ENCODE measurements at regions of chr11 and their contacts with region 1.

Region 1: DNA sequence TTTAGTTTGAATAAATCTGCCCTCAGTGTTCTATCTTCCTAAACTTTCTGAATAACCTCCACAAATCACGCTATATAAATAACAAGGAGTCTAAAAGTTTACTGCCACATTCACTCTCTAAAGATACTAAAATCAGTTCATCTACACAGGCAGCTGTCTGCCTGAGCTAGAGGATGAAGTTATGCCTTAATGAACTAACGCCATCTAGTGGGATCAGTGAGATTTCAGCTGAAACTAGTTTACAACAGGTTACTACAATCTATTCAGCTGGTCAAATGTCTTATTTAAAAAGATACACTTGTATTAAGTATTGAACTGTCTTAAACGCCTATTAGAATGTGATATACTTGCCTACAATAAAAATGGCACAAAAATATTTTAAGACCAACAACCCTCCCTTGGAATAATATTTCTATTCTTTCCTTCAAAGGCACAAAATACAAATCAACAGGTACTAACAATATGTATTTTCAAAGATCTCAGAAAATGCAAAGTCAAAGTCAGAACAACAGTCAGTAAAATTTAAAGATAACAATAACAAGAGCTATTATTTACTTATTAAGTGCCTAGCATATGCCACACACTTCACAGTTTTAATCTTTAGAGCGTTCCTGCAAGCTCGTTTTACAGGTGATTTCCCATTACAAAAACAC is 84.1 kb downstream of the LARGE2 start:
- DNase-seq: peak in 1 of 2 donors; percentile 27
- H3K4me3 ChIP-seq: no peak overlapping the region
- CTCF ChIP-seq: no peak
- POLR2A ChIP-seq: no peak

Region 2: DNA sequence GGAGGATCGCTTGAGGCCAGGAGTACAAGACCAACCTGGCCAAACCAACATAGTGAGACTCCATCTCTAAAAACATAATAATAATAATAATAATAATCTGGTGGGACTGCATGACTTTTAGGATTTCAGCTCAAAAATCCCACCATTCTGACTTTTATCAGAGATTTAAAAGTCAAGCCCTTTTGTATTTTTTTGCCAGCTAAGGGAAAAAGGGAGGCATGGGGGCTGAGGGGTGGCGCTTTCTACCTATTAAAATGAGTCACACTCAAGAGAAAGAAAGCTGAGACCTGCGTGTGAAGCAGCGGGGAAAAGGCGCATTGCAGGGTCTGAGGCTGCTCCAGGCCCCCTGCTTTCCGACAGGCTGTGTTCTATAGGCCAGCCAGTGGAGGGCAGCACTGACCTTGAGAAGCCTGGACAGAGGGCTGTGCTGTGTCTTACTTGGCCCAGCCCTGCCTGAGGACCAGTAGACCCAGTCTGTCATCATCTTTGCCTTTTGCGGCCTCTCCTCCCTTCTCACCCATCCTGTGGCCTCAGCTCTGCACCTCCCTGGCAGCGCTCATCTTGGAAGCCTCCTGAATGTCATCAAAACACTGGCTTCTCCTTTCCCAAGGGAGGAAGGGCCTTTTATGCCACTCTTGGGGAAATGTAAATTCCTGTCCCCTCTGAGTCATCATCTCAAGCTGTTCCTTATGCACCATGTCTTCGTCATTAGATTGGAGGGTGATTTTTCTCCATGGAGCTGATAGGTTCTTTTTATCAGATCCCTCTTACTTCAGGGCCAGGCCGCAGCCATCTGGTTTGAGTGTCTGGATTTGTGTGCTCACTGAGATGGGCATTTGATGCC is 133.8 kb before region 1 on chr11:
- intact Hi-C with region 1: loop called (anchors 10 kb)
- DNase-seq: no peak
- H3K4me3 ChIP-seq: no peak overlapping the region
- CTCF ChIP-seq: no peak
- POLR2A ChIP-seq: no peak

Region 3: DNA sequence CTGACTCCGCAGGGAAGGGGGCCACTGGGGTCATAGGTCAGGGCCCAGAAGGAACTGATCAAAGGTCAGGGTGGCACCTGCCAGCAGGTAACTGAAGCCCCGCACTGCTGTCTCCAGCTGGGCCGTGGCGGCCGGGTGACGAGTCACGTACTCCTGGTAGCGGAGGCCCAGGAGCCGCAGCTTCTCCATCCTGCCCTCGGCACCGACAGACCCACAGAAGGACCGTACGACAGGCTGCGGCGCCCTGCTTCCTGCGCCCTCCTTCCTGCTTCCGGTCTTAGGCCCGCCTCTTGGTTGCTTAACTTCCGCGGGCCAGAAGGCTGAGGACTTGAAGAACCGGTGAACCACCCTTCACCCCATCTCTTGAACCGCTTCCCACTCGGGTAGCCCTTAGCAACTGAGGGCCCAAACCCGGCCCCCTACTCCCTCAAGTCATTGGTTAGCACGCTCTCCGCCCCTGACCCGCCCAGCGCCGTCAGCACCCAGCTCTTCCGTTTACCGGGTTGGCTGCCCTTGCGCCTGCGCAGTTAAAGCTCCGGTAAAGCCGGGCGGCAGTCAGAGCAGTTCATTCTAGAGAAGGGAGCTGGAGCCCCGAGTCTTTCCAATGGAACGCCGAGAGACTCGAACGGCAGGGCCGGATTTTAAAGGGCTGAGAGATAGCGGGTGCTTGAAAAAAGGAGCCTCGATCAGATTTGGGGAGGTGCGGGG is 88.8 kb before region 1 on chr11 and contains the start of gene PEX16:
- intact Hi-C with region 1: no loop called
- DNase-seq: peak; percentile 97 to 99
- H3K4me3 ChIP-seq: peak within 1 kb of the TSS; percentile 77
- CTCF ChIP-seq: no peak
- POLR2A ChIP-seq: peak in 1 of 2 donors; percentile 57
- total RNA-seq, gene PEX16: 36.7 to 52.8 (median 41.2) TPM

Region 4: GRCh38 chr11:45949992-45950407 is 56.5 kb before region 1 on chr11:
- intact Hi-C with region 1: no loop called
- DNase-seq: no peak
- H3K4me3 ChIP-seq: no peak overlapping the region
- CTCF ChIP-seq: no peak
- POLR2A ChIP-seq: no peak